ENCODE measurements at regions of chr12 and their contacts with region 1.

Region 1: DNA sequence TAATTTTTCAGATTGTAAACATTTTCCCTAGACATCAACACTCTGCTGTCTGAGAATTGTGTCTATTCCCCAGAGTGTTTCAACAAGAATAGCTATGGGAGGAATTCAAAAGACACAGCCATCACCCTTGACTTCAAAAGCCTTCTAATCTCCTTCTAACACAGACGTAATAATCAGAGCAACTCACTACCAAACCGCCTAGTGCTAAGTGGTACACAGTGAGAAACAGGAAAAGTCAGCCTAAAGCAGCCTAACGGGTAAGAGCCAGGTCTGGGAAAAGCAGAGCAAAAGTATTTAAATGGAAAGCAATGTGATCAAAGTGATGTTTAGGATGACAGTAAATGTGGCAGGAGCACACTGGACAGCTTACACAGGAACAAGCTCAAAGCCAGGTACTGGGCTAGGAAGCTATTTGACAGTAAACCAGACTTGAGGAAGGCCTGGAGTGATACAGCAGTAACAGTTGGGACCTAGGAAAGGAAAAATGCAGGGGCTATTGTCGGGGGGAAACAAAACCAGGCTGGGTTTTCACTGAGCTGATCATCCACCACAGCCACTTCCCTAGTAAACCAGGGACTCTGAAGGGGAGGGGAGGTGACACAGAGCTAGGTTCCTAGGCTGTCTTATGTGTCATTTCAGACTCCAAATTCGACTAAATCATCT is 29.4 kb downstream of the CORO1C start:
- DNase-seq: peak; percentile 64
- H3K4me3 ChIP-seq: no peak overlapping the region
- H3K27ac ChIP-seq: no peak overlapping the region
- H3K4me1 ChIP-seq: peaks cover 8% of the 10 kb centered on the region
- H3K27me3 ChIP-seq: no peaks in the 10 kb centered on the region
- CTCF ChIP-seq: no peak
- POLR2A ChIP-seq: no peak

Region 2: DNA sequence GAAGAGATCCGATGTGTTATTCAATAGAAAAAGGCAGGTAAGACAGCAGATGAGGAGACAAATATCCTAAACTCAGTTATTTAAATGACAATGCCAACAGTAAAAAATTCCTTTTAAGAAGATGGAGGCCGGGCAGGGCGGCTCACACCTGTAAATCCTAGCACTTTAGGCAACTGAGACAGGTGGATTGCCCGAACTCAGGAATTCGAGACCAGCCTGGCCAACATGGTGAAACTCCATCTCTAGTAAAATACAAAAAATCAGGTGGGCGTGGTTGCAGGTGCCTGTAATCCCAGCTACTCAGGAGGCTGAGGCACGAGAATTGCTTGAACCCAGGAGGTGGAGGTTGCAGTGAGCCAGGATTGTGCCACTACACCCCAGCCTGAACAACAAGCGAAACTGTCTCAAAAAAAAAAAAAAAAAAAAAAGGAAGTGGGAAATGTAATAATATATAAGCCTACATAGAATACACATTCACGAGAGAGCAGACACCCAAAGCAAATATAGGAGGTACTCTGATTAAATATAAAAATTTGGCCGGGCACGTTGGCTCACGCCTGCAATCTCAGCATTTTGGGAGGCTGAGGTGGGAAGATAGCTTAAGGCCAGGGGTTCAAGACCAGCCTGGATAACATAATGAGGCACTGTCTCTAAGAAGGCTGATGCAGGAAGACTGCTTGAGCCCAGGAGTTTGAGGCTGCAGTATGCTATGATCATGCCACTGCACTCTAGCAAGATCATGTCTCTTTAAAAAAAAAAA is 10.4 kb after region 1 on chr12:
- CTCF ChIA-PET with region 1: interaction called, 12 read pairs
- POLR2A ChIA-PET with region 1: no interaction called
- dilution Hi-C with region 1: no loop called
- intact Hi-C with region 1: no loop called
- DNase-seq: no peak
- H3K4me3 ChIP-seq: no peak overlapping the region
- H3K27ac ChIP-seq: no peak overlapping the region
- H3K4me1 ChIP-seq: peaks cover 3% of the 10 kb centered on the region
- H3K27me3 ChIP-seq: no peaks in the 10 kb centered on the region
- CTCF ChIP-seq: no peak
- POLR2A ChIP-seq: no peak